Kidney (tissue), 22 donors: ENCODE measurements at regions of chr4 and their contacts with region 1.

Region 1: GRCh38 chr4:165131247-165131832 is 18.7 kb upstream of the TMEM192 start:
- DNase-seq: peak in 4 of 5 donors; percentile 68 to 75 (median 72)
- H3K4me3 ChIP-seq: no peak overlapping the region
- H3K27ac ChIP-seq: no peak overlapping the region
- H3K4me1 ChIP-seq: no peaks in the 10 kb centered on the region
- H3K27me3 ChIP-seq: no peaks in the 10 kb centered on the region
- CTCF ChIP-seq: peak; percentile 90

Region 2: GRCh38 chr4:165177725-165178666 is 46.7 kb after region 1 on chr4:
- intact Hi-C with region 1: no loop called
- DNase-seq: peak in 1 of 5 donors; percentile 9
- H3K4me3 ChIP-seq: no peak overlapping the region
- H3K27ac ChIP-seq: no peak overlapping the region
- H3K4me1 ChIP-seq: no peaks in the 10 kb centered on the region
- H3K27me3 ChIP-seq: no peaks in the 10 kb centered on the region
- CTCF ChIP-seq: no peak

Region 3: GRCh38 chr4:165343353-165344191 is 212.2 kb after region 1 on chr4:
- intact Hi-C with region 1: loop called (anchors 10 kb)
- DNase-seq: peak in 2 of 5 donors; percentile 5 to 30
- H3K4me3 ChIP-seq: no peak overlapping the region
- H3K27ac ChIP-seq: no peak overlapping the region
- H3K4me1 ChIP-seq: no peaks in the 10 kb centered on the region
- H3K27me3 ChIP-seq: no peaks in the 10 kb centered on the region
- CTCF ChIP-seq: peak; percentile 34